Aorta (tissue), 5 donors: ENCODE measurements at regions of chr19 and their contacts with region 1.

Region 1: DNA sequence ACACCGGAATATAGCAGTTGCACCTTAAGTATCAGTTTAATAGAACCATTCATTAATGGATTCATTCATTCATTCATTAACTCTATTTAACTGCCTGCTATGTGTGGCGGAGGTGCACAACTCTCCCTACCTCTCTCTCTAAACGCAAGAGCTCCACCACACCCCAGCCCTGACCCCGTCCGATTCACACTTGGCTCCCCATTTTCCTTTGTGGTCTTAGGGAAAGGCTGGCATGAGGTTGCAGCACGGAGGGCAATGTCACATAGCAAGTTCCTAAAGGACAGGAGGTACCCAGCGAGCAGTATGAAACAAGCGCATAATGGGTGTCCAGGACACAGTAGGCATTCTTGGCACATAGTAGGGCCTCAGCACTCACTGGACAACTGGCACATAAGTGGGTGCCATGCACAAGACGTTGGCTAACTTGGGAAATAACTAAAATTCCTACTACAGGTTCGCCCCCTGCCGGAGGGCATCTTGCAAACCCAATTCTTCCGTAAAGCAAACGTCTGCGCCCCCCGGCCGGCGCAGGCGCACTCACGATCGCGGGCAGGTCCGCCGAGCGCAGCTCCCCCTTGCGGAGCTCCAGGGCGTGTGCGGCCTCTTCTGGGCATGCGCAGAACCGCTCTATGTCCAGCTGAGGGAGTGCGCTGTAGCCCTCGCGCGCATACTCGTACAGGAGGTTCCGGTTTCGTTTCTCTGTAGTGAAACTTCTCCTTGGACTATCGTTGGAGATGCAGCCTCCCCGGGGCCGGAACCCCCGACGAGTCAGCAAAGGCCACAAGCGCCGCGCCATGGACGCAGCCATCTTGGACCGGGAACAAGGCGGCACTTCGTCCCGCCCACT is at the start of gene SARS2:
- DNase-seq: peak; percentile 94 to 97
- ATAC-seq: peak; percentile 97
- H3K4me3 ChIP-seq: peak within 1 kb of the TSS; percentile 58 to 92
- H3K27ac ChIP-seq: peak within 1 kb of the TSS in 1 of 2 donors; percentile 69
- H3K4me1 ChIP-seq: no peaks in the 10 kb centered on the region
- H3K27me3 ChIP-seq: no peaks in the 10 kb centered on the region
- total RNA-seq, gene SARS2: 5.9 to 13.8 TPM

Region 2: GRCh38 chr19:38544034-38544958 is 385.9 kb before region 1 on chr19:
- intact Hi-C with region 1: loop called (anchors 1 to 10 kb)
- DNase-seq: peak; percentile 89 to 90
- ATAC-seq: peak; percentile 85
- H3K4me3 ChIP-seq: no peak overlapping the region
- H3K27ac ChIP-seq: peak overlapping the region in 1 of 2 donors; percentile 29
- H3K4me1 ChIP-seq: no peaks in the 10 kb centered on the region
- H3K27me3 ChIP-seq: no peaks in the 10 kb centered on the region

Region 3: DNA sequence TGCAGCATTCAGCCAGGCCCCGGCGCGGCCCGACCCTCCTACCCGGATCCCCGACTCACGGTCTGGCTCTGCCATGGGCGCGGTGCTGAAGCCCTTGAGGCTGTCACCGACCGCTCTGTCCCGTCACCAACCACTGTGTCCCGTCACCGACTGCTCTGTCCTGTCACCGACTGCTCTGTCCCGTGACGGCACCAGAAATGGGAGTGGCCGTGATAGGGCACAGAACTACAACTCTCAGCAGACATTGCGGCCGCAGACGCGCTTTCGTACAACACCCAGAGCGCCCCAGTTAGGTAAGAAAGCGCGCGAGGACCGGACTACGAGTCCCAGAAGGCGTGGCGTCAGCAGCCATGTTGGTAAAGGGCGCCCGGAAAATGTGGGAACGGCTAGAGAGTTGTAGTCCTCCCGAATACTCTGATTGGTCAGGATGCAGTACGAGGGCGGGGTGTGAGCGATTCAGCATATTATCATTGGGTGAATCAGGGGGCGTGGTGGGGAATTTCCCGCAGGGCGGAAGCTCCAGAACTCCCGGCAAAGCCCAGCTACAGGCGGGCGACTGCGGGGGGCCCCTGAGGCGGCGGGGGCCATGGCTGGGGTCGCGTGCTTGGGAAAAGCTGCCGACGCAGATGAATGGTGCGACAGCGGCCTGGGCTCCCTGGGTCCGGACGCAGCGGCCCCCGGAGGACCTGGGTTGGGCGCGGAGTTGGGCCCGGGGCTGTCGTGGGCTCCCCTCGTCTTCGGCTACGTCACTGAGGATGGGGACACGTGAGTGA is 30.5 kb before region 1 on chr19 and contains the starts of genes NFKBIB and SIRT2:
- intact Hi-C with region 1: loop called in 1 of 2 experiments (anchors 2 kb)
- DNase-seq: peak; percentile 99 to 100
- ATAC-seq: peak; percentile 98
- H3K4me3 ChIP-seq: peak within 1 kb of the TSS; percentile 56 to 92
- H3K27ac ChIP-seq: peak within 1 kb of the TSS in 1 of 2 donors; percentile 24
- H3K4me1 ChIP-seq: no peaks in the 10 kb centered on the region
- H3K27me3 ChIP-seq: no peaks in the 10 kb centered on the region
- total RNA-seq, gene NFKBIB: 16.0 to 24.5 TPM
- total RNA-seq, gene SIRT2: 34.6 to 42.4 TPM